ENCODE measurements at regions of chr6 and their contacts with region 1.

Region 1: DNA sequence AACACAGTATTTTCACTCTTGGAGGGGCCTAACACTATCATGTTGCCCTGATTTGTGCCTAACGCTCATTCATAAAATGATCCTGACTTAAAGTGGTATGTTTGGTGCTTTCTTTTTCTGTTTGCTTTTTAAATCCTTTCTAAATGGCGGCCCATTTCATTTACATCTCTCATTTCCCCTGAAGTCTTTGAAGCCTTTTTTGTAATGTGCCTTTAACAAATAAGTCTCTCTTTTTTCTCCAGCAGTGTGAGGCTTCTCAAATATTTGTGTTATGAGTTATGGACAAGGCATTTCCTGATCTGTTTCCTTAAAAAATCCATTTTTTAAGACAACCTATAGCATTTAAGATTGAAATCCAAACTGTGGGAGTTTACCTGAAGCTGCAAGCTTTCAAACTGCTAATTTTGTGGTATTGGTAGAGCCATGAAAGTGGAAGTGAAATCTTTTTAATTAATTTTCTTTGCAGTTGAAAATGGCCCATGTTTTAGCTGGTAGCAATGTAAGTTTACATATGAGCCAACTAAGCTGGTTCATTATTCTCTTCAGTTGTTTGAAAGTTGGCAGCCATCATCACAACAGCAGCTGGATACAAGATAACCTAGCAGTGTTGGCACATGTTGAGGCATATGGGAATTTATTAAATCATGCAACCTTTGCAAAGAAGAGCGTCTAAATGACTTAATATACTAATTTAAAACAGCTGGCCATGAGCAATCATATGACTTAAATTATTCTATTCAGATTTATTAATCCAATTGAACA is 469.7 kb downstream of the CDKAL1 start:
- DNase-seq: peak; percentile 72
- ATAC-seq: peak; percentile 89
- H3K4me3 ChIP-seq: peak overlapping the region; percentile 32; the same call in 1 of the 2 replicates
- H3K27ac ChIP-seq: peak overlapping the region; percentile 83
- H3K4me1 ChIP-seq: peaks cover 20% of the 10 kb centered on the region
- H3K27me3 ChIP-seq: no peaks in the 10 kb centered on the region
- CTCF ChIP-seq: no peak
- EP300 ChIP-seq: peak in 1 of 2 experiments; percentile 72; a peak in 3 of 4 replicates
- POLR2A ChIP-seq: no peak
- RAD21 ChIP-seq: no peak

Region 2: GRCh38 chr6:20757761-20758160 is 246.2 kb before region 1 on chr6:
- CTCF ChIA-PET with region 1: no interaction called
- POLR2A ChIA-PET with region 1: interaction called, 10 read pairs
- RAD21 ChIA-PET with region 1: no interaction called
- SMC1A ChIA-PET with region 1: no interaction called
- in situ Hi-C with region 1: no loop called
- intact Hi-C with region 1: no loop called
- DNase-seq: no peak
- ATAC-seq: no peak
- H3K4me3 ChIP-seq: no peak overlapping the region
- H3K27ac ChIP-seq: no peak overlapping the region
- H3K4me1 ChIP-seq: no peaks in the 10 kb centered on the region
- H3K27me3 ChIP-seq: no peaks in the 10 kb centered on the region
- CTCF ChIP-seq: no peak
- EP300 ChIP-seq: no peak
- POLR2A ChIP-seq: no peak
- RAD21 ChIP-seq: no peak

Region 3: GRCh38 chr6:20978151-20978614 is 25.8 kb before region 1 on chr6:
- CTCF ChIA-PET with region 1: no interaction called
- POLR2A ChIA-PET with region 1: no interaction called
- RAD21 ChIA-PET with region 1: interaction called, 15 read pairs
- SMC1A ChIA-PET with region 1: interaction called, 10 read pairs
- in situ Hi-C with region 1: no loop called
- intact Hi-C with region 1: no loop called
- DNase-seq: peak; percentile 25
- ATAC-seq: peak; percentile 96
- H3K4me3 ChIP-seq: no peak overlapping the region
- H3K27ac ChIP-seq: no peak overlapping the region
- H3K4me1 ChIP-seq: peaks cover 11% of the 10 kb centered on the region; the same call in 1 of the 2 replicates
- H3K27me3 ChIP-seq: no peaks in the 10 kb centered on the region
- CTCF ChIP-seq: no peak
- EP300 ChIP-seq: peak; percentile 28 to 38; a peak in 2 of 4 replicates
- POLR2A ChIP-seq: no peak
- RAD21 ChIP-seq: peak; percentile 9; the same call in 1 of the 2 replicates

Region 4: GRCh38 chr6:21033575-21034026 is 29.6 kb after region 1 on chr6:
- CTCF ChIA-PET with region 1: no interaction called
- POLR2A ChIA-PET with region 1: no interaction called
- RAD21 ChIA-PET with region 1: interaction called, 18 read pairs
- SMC1A ChIA-PET with region 1: interaction called, 14 read pairs
- in situ Hi-C with region 1: no loop called
- intact Hi-C with region 1: no loop called
- DNase-seq: no peak
- ATAC-seq: no peak
- H3K4me3 ChIP-seq: no peak overlapping the region
- H3K27ac ChIP-seq: no peak overlapping the region
- H3K4me1 ChIP-seq: peaks cover 4% of the 10 kb centered on the region; the same call in 1 of the 2 replicates
- H3K27me3 ChIP-seq: no peaks in the 10 kb centered on the region
- CTCF ChIP-seq: no peak
- EP300 ChIP-seq: no peak
- POLR2A ChIP-seq: no peak
- RAD21 ChIP-seq: no peak